CD8-positive, alpha-beta T cell (primary cell): ENCODE measurements at regions of chr5 and their contacts with region 1.

Region 1: GRCh38 chr5:176361437-176362232 is at the start of gene KIAA1191:
- DNase-seq: peak; percentile 91 to 98 (median 95)
- ATAC-seq: peak; percentile 89
- H3K4me3 ChIP-seq: peak within 1 kb of the TSS; percentile 72 to 96
- H3K4me3 Mint-ChIP-seq: peak within 1 kb of the TSS; percentile 98
- H3K27ac ChIP-seq: peak within 1 kb of the TSS; percentile 68 to 86
- H3K27ac Mint-ChIP-seq: peak within 1 kb of the TSS; percentile 98
- H3K4me1 ChIP-seq: peaks cover 31% of the 10 kb centered on the region
- H3K4me1 Mint-ChIP-seq: peaks cover 41% of the 10 kb centered on the region
- H3K27me3 ChIP-seq: no peaks in the 10 kb centered on the region
- H3K27me3 Mint-ChIP-seq: no peaks in the 10 kb centered on the region
- CTCF ChIP-seq: no peak
- total RNA-seq, gene KIAA1191: 78.2 to 85.1 TPM

Region 2: DNA sequence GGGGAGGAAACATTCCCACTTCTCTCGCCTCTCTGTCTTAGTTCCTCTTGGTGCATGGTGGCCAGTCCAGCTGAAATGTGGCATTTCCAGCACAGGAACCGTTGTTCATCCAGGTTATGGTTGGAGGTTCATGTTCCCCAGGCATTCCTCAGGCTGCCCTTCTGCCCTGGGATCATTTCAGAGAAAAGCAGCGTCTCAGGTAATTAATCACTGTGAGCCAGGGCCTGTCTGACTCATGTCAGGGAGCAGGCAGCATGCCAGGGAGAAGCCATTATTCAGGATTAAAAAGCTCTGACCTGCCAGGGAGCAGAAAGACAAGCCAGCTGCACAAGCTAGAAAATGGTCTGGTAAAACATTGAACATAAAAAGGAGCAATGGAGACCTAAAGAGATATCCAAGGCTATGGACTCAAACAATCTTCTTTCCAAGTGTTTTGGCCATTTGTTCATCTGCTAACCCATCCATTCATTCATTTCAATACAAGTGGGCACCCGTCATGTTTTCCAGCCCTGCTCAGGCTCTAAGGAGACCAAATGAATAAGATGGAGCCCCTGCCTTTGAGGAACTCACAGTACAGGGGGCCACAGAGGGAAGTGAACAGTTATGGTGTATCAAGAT is 1159.1 kb before region 1 on chr5:
- CTCF ChIA-PET with region 1: no interaction called
- POLR2A ChIA-PET with region 1: no interaction called
- intact Hi-C with region 1: no loop called
- DNase-seq: no peak
- ATAC-seq: no peak
- H3K4me3 ChIP-seq: no peak overlapping the region
- H3K4me3 Mint-ChIP-seq: no peak overlapping the region
- H3K27ac ChIP-seq: no peak overlapping the region
- H3K27ac Mint-ChIP-seq: no peak overlapping the region
- H3K4me1 ChIP-seq: no peaks in the 10 kb centered on the region
- H3K4me1 Mint-ChIP-seq: no peaks in the 10 kb centered on the region
- H3K27me3 ChIP-seq: no peaks in the 10 kb centered on the region
- H3K27me3 Mint-ChIP-seq: peaks cover 12% of the 10 kb centered on the region
- CTCF ChIP-seq: no peak

Region 3: DNA sequence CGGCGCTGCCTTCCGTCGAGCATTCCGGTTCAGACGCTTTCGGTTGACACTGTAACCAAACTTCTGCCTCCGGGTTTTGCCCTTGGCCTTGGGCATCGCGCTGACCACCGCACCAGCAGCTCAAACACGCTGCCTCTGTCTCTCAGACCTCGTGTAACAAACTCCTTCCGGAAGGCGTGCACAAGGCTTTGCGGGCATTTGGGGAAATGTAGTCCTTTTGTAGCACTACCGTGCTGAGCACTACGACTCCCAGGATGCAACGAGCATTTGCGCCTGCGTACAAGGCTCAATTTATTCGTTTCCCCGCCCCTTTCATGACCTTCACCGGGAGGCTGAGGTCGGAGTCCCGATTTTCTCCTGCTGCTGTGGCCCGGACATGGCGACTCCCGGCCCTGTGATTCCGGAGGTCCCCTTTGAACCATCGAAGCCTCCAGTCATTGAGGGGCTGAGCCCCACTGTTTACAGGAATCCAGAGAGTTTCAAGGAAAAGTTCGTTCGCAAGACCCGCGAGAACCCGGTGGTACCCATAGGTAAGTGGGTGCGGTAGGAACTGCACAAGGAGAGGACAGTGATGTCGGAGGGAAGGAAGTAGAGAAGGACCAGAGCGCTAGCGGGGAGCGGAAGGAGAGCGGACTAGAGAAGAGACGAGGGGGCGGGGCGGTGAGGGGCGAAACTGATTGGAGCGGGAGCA is 27.0 kb after region 1 on chr5 and contains the starts of genes HIGD2A and NOP16:
- CTCF ChIA-PET with region 1: interaction called, 8 read pairs
- POLR2A ChIA-PET with region 1: interaction called, 24 read pairs
- intact Hi-C with region 1: loop called (anchors 1 kb)
- DNase-seq: peak; percentile 97 to 100 (median 99)
- ATAC-seq: peak; percentile 90
- H3K4me3 ChIP-seq: peak within 1 kb of the TSS; percentile 87 to 89
- H3K4me3 Mint-ChIP-seq: peak within 1 kb of the TSS; percentile 99
- H3K27ac ChIP-seq: peak within 1 kb of the TSS; percentile 90 to 93
- H3K27ac Mint-ChIP-seq: peak within 1 kb of the TSS; percentile 99
- H3K4me1 ChIP-seq: peaks cover 22% of the 10 kb centered on the region
- H3K4me1 Mint-ChIP-seq: peaks cover 36% of the 10 kb centered on the region
- H3K27me3 ChIP-seq: no peaks in the 10 kb centered on the region
- H3K27me3 Mint-ChIP-seq: no peaks in the 10 kb centered on the region
- CTCF ChIP-seq: no peak
- total RNA-seq, gene HIGD2A: 102 to 106 TPM
- total RNA-seq, gene NOP16: 21.6 to 24.2 TPM